HEK293 (cell line): ENCODE measurements at regions of chr3 and their contacts with region 1.

Region 1: DNA sequence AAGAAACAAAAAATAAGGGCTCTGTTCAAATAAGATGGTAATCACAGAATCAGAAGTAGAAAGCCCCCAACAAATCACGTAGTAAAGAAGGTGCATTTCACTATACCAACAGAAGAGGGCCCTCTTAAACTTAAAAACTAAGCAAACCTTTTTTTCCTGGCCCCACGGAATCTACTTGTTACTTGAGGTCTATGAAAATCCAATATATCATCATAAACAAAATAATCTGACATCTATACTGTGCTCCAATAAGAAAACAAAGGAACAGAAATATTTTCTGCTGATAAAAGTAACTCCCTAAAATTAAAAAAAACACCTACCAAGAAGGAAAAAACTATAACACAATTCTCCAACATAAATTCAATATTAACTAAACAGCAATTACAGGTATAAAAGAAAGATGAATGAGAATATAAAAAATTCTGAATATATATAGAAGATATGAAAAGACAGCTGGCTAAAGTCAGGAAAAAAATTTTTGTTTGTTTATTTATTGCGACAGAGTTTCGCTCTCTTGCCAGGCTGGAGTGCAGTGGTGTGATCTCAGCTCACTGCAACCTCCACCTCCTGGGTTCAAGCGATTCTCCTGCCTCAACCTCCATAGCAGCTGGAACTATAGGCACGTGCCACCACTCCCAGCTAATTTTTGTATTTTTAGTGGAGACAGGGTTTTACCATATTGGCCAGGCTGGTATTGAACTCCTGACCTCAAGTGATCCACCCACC is 81.8 kb downstream of the CLASP2 start:
- H3K4me3 ChIP-seq: no peak overlapping the region
- H3K27ac ChIP-seq: no peak overlapping the region
- H3K4me1 ChIP-seq: no peaks in the 10 kb centered on the region
- CTCF ChIP-seq: no peak

Region 2: GRCh38 chr3:33694944-33695343 is 58.7 kb after region 1 on chr3:
- CTCF ChIA-PET with region 1: no interaction called
- POLR2A ChIA-PET with region 1: no interaction called
- H3K4me3 ChIP-seq: no peak overlapping the region
- H3K27ac ChIP-seq: no peak overlapping the region
- H3K4me1 ChIP-seq: no peaks in the 10 kb centered on the region
- CTCF ChIP-seq: no peak

Region 3: DNA sequence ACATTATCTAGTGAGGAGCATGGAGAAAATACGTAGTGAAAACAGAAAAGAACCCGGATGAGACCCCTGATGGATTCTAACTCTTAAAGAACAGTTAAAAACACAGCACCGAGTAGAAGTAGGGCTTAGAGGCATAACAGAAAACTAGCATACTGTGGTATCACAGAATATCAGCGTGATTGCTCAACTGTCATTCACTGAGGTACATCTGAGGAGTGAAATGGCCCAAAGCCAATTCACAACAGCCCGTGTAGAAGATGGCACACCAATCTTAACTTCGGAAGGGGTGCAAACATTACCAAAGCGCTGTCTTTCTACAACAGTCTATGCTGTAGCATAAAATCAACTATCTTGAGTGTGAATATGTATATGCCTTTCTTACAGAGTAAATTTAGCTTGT is 79.9 kb after region 1 on chr3:
- CTCF ChIA-PET with region 1: interaction called, 11 read pairs
- POLR2A ChIA-PET with region 1: no interaction called
- H3K4me3 ChIP-seq: peak overlapping the region; percentile 93
- H3K27ac ChIP-seq: no peak overlapping the region
- H3K4me1 ChIP-seq: no peaks in the 10 kb centered on the region
- CTCF ChIP-seq: no peak

Region 4: GRCh38 chr3:33775363-33775762 is 139.1 kb after region 1 on chr3:
- CTCF ChIA-PET with region 1: interaction called, 16 read pairs
- POLR2A ChIA-PET with region 1: no interaction called
- H3K4me3 ChIP-seq: no peak overlapping the region
- H3K27ac ChIP-seq: no peak overlapping the region
- H3K4me1 ChIP-seq: no peaks in the 10 kb centered on the region
- CTCF ChIP-seq: no peak

Region 5: DNA sequence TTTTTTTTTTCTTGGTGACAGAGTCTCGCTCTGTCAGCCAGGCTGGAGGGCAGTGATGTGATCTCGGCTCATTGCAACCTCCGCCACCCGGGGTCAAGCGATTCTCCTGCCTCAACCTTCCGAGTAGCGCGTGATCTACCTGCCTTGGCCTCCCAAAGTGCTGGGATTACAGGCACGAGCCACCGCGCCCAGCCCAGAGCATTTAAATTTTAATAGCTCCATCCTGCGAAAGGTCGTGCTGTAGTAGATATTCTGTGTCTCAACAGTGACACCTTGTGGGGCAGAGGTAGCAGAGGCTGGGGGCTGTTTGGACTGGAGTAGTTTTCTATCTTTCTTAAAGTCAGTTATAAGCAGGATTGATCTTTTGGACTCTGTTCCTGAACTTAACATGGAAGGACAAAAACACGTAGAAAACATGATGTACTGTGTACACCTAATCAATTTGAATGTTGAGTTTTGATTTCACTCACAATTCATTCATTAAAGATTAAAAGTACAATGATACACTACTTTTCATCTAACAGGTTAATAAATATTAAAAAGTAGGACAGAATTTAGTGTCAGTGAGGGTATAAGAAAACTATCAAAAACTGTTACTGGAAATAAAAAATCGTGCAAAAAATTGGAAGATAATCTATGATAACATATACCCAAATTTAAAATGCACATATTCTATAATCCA is 151.2 kb after region 1 on chr3:
- CTCF ChIA-PET with region 1: interaction called, 21 read pairs
- POLR2A ChIA-PET with region 1: no interaction called
- H3K4me3 ChIP-seq: peak overlapping the region; percentile 11; the same call in 1 of the 2 replicates
- H3K27ac ChIP-seq: no peak overlapping the region
- H3K4me1 ChIP-seq: no peaks in the 10 kb centered on the region
- CTCF ChIP-seq: peak; percentile 37; the same call in 1 of the 2 replicates